CD4-positive, alpha-beta T cell (primary cell): ENCODE measurements at regions of chr11 and their contacts with region 1.

Region 1: GRCh38 chr11:74170694-74171629 is at the starts of genes C2CD3 and PPME1:
- DNase-seq: peak; percentile 93 to 100 (median 97)
- ATAC-seq: peak; percentile 94
- H3K4me3 ChIP-seq: peak within 1 kb of the TSS; percentile 90
- H3K4me3 Mint-ChIP-seq: no peak within 1 kb of the TSS
- H3K27ac ChIP-seq: peak within 1 kb of the TSS; percentile 75 to 78
- H3K27ac Mint-ChIP-seq: no peak within 1 kb of the TSS
- H3K4me1 ChIP-seq: peaks cover 26% of the 10 kb centered on the region
- H3K4me1 Mint-ChIP-seq: peaks cover 20% of the 10 kb centered on the region
- H3K27me3 ChIP-seq: no peaks in the 10 kb centered on the region
- H3K27me3 Mint-ChIP-seq: no peaks in the 10 kb centered on the region
- CTCF ChIP-seq: peak; percentile 24
- total RNA-seq, gene C2CD3: 31.9 to 35.1 TPM
- total RNA-seq, gene PPME1: 13.7 to 16.3 TPM

Region 2: DNA sequence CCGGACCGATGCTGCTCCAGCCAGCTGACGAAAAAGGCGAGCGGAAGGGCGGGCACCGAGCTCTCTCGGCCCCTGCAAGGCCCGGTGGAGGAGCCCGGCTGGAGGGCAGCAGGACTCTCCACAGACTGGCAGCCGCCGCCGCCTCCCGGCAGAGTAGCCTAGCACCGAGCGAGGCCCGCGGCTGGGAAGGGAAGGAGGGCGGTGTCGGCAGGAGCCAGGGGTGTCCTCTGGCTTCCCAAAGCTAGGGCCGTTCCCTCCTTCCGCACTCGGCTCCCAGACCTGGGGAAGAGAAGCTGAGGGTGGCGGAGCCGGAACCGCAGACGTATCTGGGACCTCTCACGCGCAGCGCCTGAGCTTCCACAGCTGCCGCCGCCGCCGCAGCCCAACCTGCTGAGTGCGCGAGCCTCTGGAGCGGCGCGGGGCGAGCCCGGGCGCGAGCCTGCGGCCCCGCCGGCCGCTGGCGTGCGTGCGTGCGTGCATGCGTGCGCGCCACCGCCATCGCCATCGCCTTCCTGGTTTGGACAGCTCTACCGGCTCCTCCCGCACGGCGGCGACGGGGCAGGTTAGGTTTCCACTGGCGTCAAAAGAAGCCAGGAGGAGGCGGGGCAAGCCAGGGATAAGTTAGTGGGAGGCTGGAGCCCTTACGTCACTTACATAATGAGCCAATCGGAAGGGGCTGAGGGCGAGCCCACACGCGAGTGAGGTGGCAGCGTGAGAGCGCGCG is 410.1 kb before region 1 on chr11 and contains the start of gene RAB6A:
- CTCF ChIA-PET with region 1: no interaction called
- POLR2A ChIA-PET with region 1: no interaction called
- intact Hi-C with region 1: loop called in 1 of 2 experiments (anchors 5 kb)
- DNase-seq: peak; percentile 98 to 100 (median 100)
- ATAC-seq: peak; percentile 90
- H3K4me3 ChIP-seq: peak within 1 kb of the TSS; percentile 93
- H3K4me3 Mint-ChIP-seq: peak within 1 kb of the TSS; percentile 84
- H3K27ac ChIP-seq: peak within 1 kb of the TSS; percentile 82 to 84
- H3K27ac Mint-ChIP-seq: peak within 1 kb of the TSS; percentile 83
- H3K4me1 ChIP-seq: peaks cover 13% of the 10 kb centered on the region
- H3K4me1 Mint-ChIP-seq: peaks cover 39% of the 10 kb centered on the region
- H3K27me3 ChIP-seq: no peaks in the 10 kb centered on the region
- H3K27me3 Mint-ChIP-seq: no peaks in the 10 kb centered on the region
- CTCF ChIP-seq: no peak
- total RNA-seq, gene RAB6A: 42.6 to 49.3 TPM

Region 3: DNA sequence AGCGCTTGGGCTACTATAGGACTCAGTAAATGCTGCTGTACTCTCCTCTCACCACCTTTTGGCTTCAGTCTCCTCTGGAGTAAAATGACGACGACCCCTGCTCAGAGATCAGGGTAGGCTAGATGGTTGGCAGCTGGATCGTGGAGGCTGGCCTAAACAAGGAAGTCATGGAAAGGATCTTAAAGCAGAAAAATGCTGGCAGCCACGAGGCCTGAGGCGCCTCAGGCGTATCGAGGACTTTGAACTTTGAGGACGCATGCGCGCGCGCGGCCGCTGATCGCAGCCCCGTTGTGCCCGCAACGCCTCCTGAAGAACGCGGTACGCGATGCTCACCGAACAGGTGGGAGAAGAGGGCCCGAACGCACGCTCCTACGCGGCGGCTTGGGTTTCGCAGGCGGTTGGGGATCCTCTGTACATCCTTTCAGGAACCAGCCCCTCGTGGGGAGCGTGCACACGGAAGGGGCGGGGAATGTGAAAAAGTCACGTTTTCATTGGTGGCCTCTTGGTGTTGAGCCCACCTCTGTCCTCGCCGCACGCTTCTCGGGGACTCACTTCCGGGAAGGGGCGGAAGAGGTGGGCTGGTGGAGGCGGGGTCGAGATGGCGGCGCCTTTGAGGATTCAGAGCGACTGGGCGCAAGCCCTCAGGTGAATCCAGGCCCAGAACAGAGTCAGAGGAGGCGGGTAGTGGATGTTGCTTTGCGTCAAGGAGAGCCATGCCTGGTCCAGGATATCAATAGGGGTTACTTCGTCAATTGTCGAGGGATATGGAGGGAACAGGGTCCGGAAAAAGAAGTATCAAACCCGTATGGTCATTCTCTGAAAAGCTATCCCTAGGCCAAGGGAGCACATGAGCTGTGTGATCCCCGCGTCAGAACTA is 294.3 kb before region 1 on chr11 and contains the starts of genes COA4 and PAAF1:
- CTCF ChIA-PET with region 1: no interaction called
- POLR2A ChIA-PET with region 1: no interaction called
- intact Hi-C with region 1: loop called (anchors 2 kb)
- DNase-seq: peak; percentile 83 to 98 (median 90)
- ATAC-seq: peak; percentile 95
- H3K4me3 ChIP-seq: peak within 1 kb of the TSS; percentile 74
- H3K4me3 Mint-ChIP-seq: peak within 1 kb of the TSS; percentile 96
- H3K27ac ChIP-seq: peak within 1 kb of the TSS; percentile 71 to 90
- H3K27ac Mint-ChIP-seq: peak within 1 kb of the TSS; percentile 91
- H3K4me1 ChIP-seq: peaks cover 30% of the 10 kb centered on the region
- H3K4me1 Mint-ChIP-seq: peaks cover 52% of the 10 kb centered on the region
- H3K27me3 ChIP-seq: no peaks in the 10 kb centered on the region
- H3K27me3 Mint-ChIP-seq: no peaks in the 10 kb centered on the region
- CTCF ChIP-seq: no peak
- total RNA-seq, gene COA4: 20.7 to 23.9 TPM
- total RNA-seq, gene PAAF1: 6.2 to 7.6 TPM

Region 4: DNA sequence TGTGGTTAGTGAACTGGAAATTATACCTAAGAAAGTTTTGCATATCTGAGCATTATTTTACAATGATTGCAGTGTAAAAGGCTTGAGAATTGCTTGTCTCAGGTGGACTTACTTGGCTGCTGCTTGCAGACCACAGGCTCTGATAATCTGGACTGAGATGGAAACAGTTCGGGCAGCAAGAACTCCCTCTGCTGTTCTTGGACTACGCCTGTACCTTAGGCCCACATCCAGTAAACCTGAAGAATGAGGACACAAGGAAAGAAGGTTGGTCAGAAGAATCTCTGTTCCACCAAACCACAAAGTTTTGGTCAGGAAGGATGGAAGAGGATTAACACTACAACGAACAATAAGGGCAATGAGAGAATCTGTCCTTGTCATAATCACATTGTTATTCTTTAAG is 80.3 kb before region 1 on chr11:
- CTCF ChIA-PET with region 1: no interaction called
- POLR2A ChIA-PET with region 1: no interaction called
- intact Hi-C with region 1: no loop called
- DNase-seq: peak in 4 of 14 experiments; percentile 19 to 52 (median 38)
- ATAC-seq: no peak
- H3K4me3 ChIP-seq: no peak overlapping the region
- H3K4me3 Mint-ChIP-seq: no peak overlapping the region
- H3K27ac ChIP-seq: no peak overlapping the region
- H3K27ac Mint-ChIP-seq: no peak overlapping the region
- H3K4me1 ChIP-seq: no peaks in the 10 kb centered on the region
- H3K4me1 Mint-ChIP-seq: no peaks in the 10 kb centered on the region
- H3K27me3 ChIP-seq: no peaks in the 10 kb centered on the region
- H3K27me3 Mint-ChIP-seq: no peaks in the 10 kb centered on the region
- CTCF ChIP-seq: no peak

Region 5: GRCh38 chr11:74123008-74123448 is 47.9 kb before region 1 on chr11:
- CTCF ChIA-PET with region 1: no interaction called
- POLR2A ChIA-PET with region 1: no interaction called
- intact Hi-C with region 1: no loop called
- DNase-seq: no peak
- ATAC-seq: no peak
- H3K4me3 ChIP-seq: no peak overlapping the region
- H3K4me3 Mint-ChIP-seq: no peak overlapping the region
- H3K27ac ChIP-seq: no peak overlapping the region
- H3K27ac Mint-ChIP-seq: no peak overlapping the region
- H3K4me1 ChIP-seq: no peaks in the 10 kb centered on the region
- H3K4me1 Mint-ChIP-seq: no peaks in the 10 kb centered on the region
- H3K27me3 ChIP-seq: no peaks in the 10 kb centered on the region
- H3K27me3 Mint-ChIP-seq: no peaks in the 10 kb centered on the region
- CTCF ChIP-seq: no peak

Region 6: DNA sequence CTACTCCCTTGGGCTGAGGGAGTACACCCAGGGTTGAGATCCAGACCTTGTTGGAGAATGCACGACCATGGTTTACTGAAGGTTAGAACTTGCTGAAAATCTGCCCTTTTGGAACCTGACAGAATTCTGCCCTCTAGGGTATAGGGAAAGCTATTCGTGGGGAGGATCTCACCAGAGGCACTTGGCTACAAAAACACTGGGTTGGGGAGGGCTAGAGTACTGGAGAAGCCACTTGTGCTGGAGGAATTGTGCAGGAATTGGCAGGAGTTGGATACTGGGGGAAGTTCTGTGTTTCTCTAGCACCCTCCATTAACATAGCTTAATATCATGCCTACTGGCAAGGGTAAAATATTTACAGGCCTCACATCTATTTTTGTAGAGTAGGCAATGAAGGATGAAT is 55.9 kb after region 1 on chr11:
- CTCF ChIA-PET with region 1: no interaction called
- POLR2A ChIA-PET with region 1: interaction called, 15 read pairs
- intact Hi-C with region 1: loop called (anchors 1 to 5 kb)
- DNase-seq: no peak
- ATAC-seq: no peak
- H3K4me3 ChIP-seq: no peak overlapping the region
- H3K4me3 Mint-ChIP-seq: no peak overlapping the region
- H3K27ac ChIP-seq: no peak overlapping the region
- H3K27ac Mint-ChIP-seq: peak overlapping the region; percentile 54
- H3K4me1 ChIP-seq: peaks cover 4% of the 10 kb centered on the region
- H3K4me1 Mint-ChIP-seq: peaks cover 30% of the 10 kb centered on the region
- H3K27me3 ChIP-seq: no peaks in the 10 kb centered on the region
- H3K27me3 Mint-ChIP-seq: no peaks in the 10 kb centered on the region
- CTCF ChIP-seq: no peak

Region 7: DNA sequence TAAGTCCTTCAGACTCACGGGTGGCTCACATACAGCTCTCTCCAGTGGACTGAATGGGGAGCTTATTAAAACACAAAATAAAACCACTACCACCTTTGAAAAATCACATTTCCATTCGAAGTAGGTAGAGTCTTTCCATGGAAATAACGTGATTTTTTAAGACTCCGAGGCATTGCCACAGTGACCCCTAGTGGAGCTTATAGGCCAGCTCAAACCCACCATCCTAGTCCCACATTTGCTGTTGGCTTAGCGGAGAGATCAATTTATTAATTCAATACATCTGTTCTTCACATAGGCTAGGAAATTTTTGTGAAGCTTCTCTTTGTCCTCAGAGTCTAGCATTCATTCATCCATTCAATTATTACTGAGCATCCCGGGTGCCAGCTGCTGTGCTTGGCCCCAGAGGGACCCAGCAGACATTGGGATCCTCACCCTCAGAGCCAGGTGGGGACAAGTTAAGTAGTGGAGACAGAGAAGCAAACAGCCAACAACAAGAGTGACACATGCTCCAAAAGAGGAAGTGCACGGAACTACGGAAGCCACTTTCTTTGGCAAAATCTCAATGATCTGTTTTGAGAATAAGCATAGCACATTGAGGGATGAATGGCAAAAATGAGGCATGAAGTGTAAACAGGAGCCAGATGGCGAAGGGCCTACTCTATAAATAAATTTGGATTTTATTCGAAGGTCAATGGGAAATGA is 150.7 kb after region 1 on chr11:
- CTCF ChIA-PET with region 1: no interaction called
- POLR2A ChIA-PET with region 1: no interaction called
- intact Hi-C with region 1: no loop called
- DNase-seq: peak in 5 of 14 experiments; percentile 12 to 63 (median 26)
- ATAC-seq: peak; percentile 58
- H3K4me3 ChIP-seq: no peak overlapping the region
- H3K4me3 Mint-ChIP-seq: no peak overlapping the region
- H3K27ac ChIP-seq: no peak overlapping the region
- H3K27ac Mint-ChIP-seq: no peak overlapping the region
- H3K4me1 ChIP-seq: no peaks in the 10 kb centered on the region
- H3K4me1 Mint-ChIP-seq: no peaks in the 10 kb centered on the region
- H3K27me3 ChIP-seq: peaks cover 0 to 11% of the 10 kb centered on the region in 2 experiments
- H3K27me3 Mint-ChIP-seq: peaks cover 4% of the 10 kb centered on the region
- CTCF ChIP-seq: peak; percentile 56

Region 8: DNA sequence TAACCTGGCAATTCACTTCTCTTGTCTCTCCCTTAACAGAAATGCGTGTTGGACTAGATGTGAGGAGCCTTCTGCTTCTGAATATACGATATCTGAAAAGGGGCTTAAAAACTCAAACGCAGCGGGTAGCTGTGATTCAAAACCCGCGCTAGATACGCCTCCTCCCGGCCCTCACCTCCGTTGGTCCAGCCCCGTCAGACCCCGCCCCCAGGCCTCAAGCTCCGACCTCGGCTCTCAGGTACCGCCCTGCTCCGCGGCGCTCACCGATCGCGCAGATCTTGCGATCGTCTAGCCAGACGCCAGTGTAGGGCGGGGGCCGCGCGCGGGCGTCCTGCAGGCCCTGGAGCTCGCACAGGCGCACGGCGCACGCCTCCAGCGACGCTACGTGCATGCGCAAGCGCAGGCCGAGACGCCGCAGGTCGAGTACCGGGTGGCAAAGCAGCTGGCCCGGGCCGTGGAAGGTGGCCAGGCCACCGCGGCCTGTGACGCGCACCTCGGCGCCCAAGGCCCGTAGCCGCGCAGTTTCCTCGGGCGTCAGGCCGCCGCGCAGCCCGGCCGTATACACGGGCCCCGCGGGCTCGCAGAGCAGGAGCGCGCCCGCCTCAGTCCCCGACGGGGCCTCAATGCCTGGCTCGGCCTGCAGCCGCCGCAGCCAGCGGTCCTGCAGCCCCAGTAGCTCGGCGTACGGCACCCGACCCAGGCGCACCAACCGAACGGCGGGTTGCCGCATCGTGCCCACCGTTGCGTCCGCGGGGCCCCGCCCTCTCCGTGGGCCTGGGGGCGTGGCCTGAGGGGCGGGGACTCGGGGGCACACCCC is 322.2 kb after region 1 on chr11 and contains the start of gene LIPT2:
- CTCF ChIA-PET with region 1: no interaction called
- POLR2A ChIA-PET with region 1: interaction called, 29 read pairs
- intact Hi-C with region 1: loop called (anchors 2 to 5 kb)
- DNase-seq: peak; percentile 94 to 99 (median 98)
- ATAC-seq: peak; percentile 95
- H3K4me3 ChIP-seq: peak within 1 kb of the TSS; percentile 66
- H3K4me3 Mint-ChIP-seq: peak within 1 kb of the TSS; percentile 91
- H3K27ac ChIP-seq: peak within 1 kb of the TSS; percentile 61 to 94
- H3K27ac Mint-ChIP-seq: peak within 1 kb of the TSS; percentile 86
- H3K4me1 ChIP-seq: peaks cover 12% of the 10 kb centered on the region
- H3K4me1 Mint-ChIP-seq: peaks cover 41% of the 10 kb centered on the region
- H3K27me3 ChIP-seq: no peaks in the 10 kb centered on the region
- H3K27me3 Mint-ChIP-seq: no peaks in the 10 kb centered on the region
- CTCF ChIP-seq: no peak
- total RNA-seq, gene LIPT2: 10.7 to 10.9 TPM

Region 9: GRCh38 chr11:74948898-74949747 is 778.2 kb after region 1 on chr11 and contains the starts of genes SPCS2 and XRRA1:
- CTCF ChIA-PET with region 1: no interaction called
- POLR2A ChIA-PET with region 1: no interaction called
- intact Hi-C with region 1: loop called in 1 of 2 experiments (anchors 5 kb)
- DNase-seq: peak; percentile 94 to 99 (median 97)
- ATAC-seq: peak; percentile 96
- H3K4me3 ChIP-seq: peak within 1 kb of the TSS; percentile 85
- H3K4me3 Mint-ChIP-seq: peak within 1 kb of the TSS; percentile 96
- H3K27ac ChIP-seq: peak within 1 kb of the TSS; percentile 71 to 76
- H3K27ac Mint-ChIP-seq: peak within 1 kb of the TSS; percentile 90
- H3K4me1 ChIP-seq: peaks cover 35% of the 10 kb centered on the region
- H3K4me1 Mint-ChIP-seq: peaks cover 65% of the 10 kb centered on the region
- H3K27me3 ChIP-seq: no peaks in the 10 kb centered on the region
- H3K27me3 Mint-ChIP-seq: no peaks in the 10 kb centered on the region
- CTCF ChIP-seq: no peak
- total RNA-seq, gene SPCS2: 36.5 to 42.9 TPM
- total RNA-seq, gene XRRA1: 12.2 to 12.5 TPM